ENCODE measurements at regions of chr6 and their contacts with region 1.

Region 1: DNA sequence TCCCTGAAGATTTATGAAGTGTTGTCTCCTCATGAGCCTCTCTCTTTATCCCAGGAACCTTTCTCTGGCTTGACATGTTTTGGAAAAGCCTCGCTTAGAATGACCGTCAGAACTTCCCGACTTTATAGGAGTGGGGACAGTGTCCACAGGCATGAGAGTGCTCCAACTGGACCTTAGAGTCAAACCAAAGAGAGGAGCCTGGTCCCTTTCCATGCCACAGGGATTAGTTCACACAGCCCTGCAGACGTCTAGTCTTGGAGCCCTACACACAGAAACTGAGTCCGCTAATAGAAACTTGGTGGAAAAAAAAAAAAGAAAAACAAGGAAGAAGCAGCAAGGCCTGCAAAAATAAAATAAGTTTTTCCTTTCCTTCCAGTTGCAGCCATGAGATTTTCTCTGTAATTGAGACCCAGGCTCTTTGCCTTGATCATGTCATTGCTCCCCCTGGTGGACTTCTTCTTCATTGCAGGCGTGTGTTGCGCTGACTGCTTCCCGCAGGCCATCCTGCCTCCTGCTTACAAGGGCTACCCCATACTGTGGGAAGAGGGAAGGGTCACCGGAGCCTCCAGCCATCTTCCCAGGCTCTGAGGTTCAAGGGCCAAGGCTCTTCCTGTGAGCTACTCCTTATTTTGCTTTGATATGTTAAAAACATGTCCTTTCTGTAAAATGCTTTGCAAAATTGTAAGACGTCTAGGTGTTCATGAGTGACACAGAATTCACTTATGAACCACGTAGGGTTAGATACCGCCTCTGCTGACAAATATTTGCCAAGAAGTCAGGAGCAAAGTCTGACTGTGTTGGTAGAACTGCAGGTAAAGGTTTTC is 201.0 kb downstream of the UST start:
- DNase-seq: peak; percentile 86
- ATAC-seq: peak; percentile 96

Region 2: GRCh38 chr6:148578245-148578732 is 369.5 kb before region 1 on chr6:
- intact Hi-C with region 1: loop called (anchors 5 kb)
- DNase-seq: peak; percentile 87
- ATAC-seq: peak; percentile 100

Region 3: DNA sequence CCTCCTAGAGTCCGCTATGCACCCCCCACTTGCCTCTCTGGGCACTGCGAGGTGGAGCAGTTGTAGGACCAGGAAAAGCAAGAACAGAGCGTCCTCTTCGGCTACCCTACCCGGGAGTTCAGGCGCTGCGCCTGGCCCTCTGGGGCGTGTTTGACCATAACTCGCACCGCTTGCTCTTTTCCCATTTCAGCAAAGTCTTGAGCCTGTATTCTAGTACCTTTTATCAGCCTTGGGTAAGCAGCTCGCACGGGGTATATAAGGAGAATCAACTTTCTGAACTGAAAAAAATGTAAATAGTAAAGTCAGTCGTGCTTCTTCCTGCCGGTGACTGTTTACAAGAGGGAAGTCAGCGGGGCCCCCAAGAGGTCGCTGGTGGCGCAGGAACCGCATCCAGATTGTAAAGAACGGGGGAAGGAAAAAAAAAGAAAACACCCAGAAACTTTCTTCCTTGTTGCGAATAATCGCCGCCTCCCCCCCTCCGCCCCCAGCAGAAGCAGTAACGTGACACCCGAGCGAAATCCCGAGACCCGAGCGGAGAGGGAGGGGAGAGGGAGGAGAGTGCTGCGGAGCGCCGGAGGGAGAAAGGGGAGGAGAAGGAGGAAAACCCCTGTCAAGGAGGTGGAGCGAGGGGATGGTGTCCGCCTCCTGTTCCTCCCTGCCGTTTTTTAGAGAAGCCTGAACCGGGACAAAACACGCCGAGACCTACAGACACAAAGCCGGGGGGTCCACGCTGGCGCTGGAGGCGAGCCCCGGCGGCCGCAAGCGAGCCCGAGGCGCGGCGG is 201.3 kb before region 1 on chr6 and contains the start of gene UST:
- intact Hi-C with region 1: loop called (anchors 5 kb)
- DNase-seq: peak; percentile 89
- ATAC-seq: peak; percentile 90
- total RNA-seq, gene UST: 3.9 TPM

Measured in Right ventricle myocardium superior (tissue), 1 donor.